GM12878 (cell line): ENCODE measurements at regions of chr12 and their contacts with region 1.

Region 1: GRCh38 chr12:110619534-110619953 is 5.6 kb downstream of the TCTN1 start:
- DNase-seq: peak; percentile 80
- ATAC-seq: peak; percentile 91
- H3K4me3 ChIP-seq: peak overlapping the region; percentile 75
- H3K27ac ChIP-seq: peak overlapping the region; percentile 61
- H3K4me1 ChIP-seq: peaks cover 25% of the 10 kb centered on the region
- H3K27me3 ChIP-seq: no peaks in the 10 kb centered on the region
- CTCF ChIP-seq: peak; percentile 40 to 81 (median 46); a peak in 5 of 6 replicates
- EP300 ChIP-seq: peak; percentile 60 to 94
- POLR2A ChIP-seq: no peak
- RAD21 ChIP-seq: peak; percentile 76

Region 2: GRCh38 chr12:110565919-110566871 is 53.3 kb before region 1 on chr12:
- CTCF ChIA-PET with region 1: no interaction called
- POLR2A ChIA-PET with region 1: no interaction called
- RAD21 ChIA-PET with region 1: no interaction called
- SMC1A ChIA-PET with region 1: no interaction called
- in situ Hi-C with region 1: no loop called
- intact Hi-C with region 1: no loop called
- DNase-seq: no peak
- ATAC-seq: peak; percentile 8; the same call in 2 of the 3 replicates
- H3K4me3 ChIP-seq: no peak overlapping the region
- H3K27ac ChIP-seq: peak overlapping the region; percentile 4; the same call in 1 of the 2 replicates
- H3K4me1 ChIP-seq: peaks cover 20% of the 10 kb centered on the region; the same call in 1 of the 2 replicates
- H3K27me3 ChIP-seq: no peaks in the 10 kb centered on the region
- CTCF ChIP-seq: no peak
- EP300 ChIP-seq: no peak
- POLR2A ChIP-seq: no peak
- RAD21 ChIP-seq: no peak

Region 3: GRCh38 chr12:110590806-110591326 is 28.7 kb before region 1 on chr12:
- CTCF ChIA-PET with region 1: no interaction called
- POLR2A ChIA-PET with region 1: no interaction called
- RAD21 ChIA-PET with region 1: no interaction called
- SMC1A ChIA-PET with region 1: no interaction called
- in situ Hi-C with region 1: no loop called
- intact Hi-C with region 1: no loop called
- DNase-seq: peak; percentile 79
- ATAC-seq: peak; percentile 93
- H3K4me3 ChIP-seq: peak overlapping the region; percentile 42; the same call in 1 of the 2 replicates
- H3K27ac ChIP-seq: peak overlapping the region; percentile 85
- H3K4me1 ChIP-seq: peaks cover 15% of the 10 kb centered on the region
- H3K27me3 ChIP-seq: no peaks in the 10 kb centered on the region
- CTCF ChIP-seq: no peak
- EP300 ChIP-seq: peak in 1 of 2 experiments; percentile 81; a peak in 2 of 4 replicates
- POLR2A ChIP-seq: no peak
- RAD21 ChIP-seq: no peak

Region 4: DNA sequence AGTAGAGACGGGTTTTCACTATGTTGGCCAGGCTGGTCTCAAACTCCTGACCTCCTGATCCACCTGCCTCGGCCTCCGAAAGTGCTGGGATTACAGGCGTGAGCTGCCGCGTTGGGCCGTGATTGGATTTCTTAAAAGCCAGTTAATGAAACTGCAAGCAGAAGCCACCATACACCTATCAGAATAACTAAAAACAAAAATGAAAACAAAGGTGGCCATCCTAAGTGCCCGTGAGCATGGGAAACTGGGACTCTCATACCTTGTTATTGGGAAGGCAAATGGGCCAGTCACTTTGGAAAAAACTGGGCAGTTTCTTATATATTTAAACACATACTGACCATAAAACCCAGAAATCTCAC is 13.3 kb before region 1 on chr12:
- CTCF ChIA-PET with region 1: interaction called, 11 read pairs
- POLR2A ChIA-PET with region 1: interaction called, 12 read pairs
- RAD21 ChIA-PET with region 1: interaction called, 13 read pairs
- SMC1A ChIA-PET with region 1: interaction called, 22 read pairs
- in situ Hi-C with region 1: no loop called
- intact Hi-C with region 1: no loop called
- DNase-seq: no peak
- ATAC-seq: peak; percentile 57
- H3K4me3 ChIP-seq: peak overlapping the region; percentile 63
- H3K27ac ChIP-seq: peak overlapping the region; percentile 86
- H3K4me1 ChIP-seq: peaks cover 20% of the 10 kb centered on the region
- H3K27me3 ChIP-seq: no peaks in the 10 kb centered on the region
- CTCF ChIP-seq: no peak
- EP300 ChIP-seq: no peak
- POLR2A ChIP-seq: no peak
- RAD21 ChIP-seq: no peak

Region 5: GRCh38 chr12:110647631-110648040 is 28.1 kb after region 1 on chr12:
- CTCF ChIA-PET with region 1: interaction called, 12 read pairs
- POLR2A ChIA-PET with region 1: interaction called, 6 read pairs
- RAD21 ChIA-PET with region 1: interaction called, 23 read pairs
- SMC1A ChIA-PET with region 1: interaction called, 24 read pairs
- in situ Hi-C with region 1: no loop called
- intact Hi-C with region 1: no loop called
- DNase-seq: no peak
- ATAC-seq: peak; percentile 88
- H3K4me3 ChIP-seq: no peak overlapping the region
- H3K27ac ChIP-seq: peak overlapping the region; percentile 20; the same call in 1 of the 2 replicates
- H3K4me1 ChIP-seq: peaks cover 17% of the 10 kb centered on the region
- H3K27me3 ChIP-seq: no peaks in the 10 kb centered on the region
- CTCF ChIP-seq: no peak
- EP300 ChIP-seq: peak in 1 of 2 experiments; percentile 35; a peak in 1 of 4 replicates
- POLR2A ChIP-seq: no peak
- RAD21 ChIP-seq: no peak

Region 6: GRCh38 chr12:110670161-110670701 is 50.7 kb after region 1 on chr12:
- CTCF ChIA-PET with region 1: interaction called, 24 read pairs
- POLR2A ChIA-PET with region 1: interaction called, 11 read pairs
- RAD21 ChIA-PET with region 1: interaction called, 22 read pairs
- SMC1A ChIA-PET with region 1: interaction called, 49 read pairs
- in situ Hi-C with region 1: no loop called
- intact Hi-C with region 1: loop called (anchors 2 kb)
- DNase-seq: peak; percentile 95
- ATAC-seq: peak; percentile 63
- H3K4me3 ChIP-seq: peak overlapping the region; percentile 82; the same call in 1 of the 2 replicates
- H3K27ac ChIP-seq: peak overlapping the region; percentile 99
- H3K4me1 ChIP-seq: peaks cover 76% of the 10 kb centered on the region
- H3K27me3 ChIP-seq: no peaks in the 10 kb centered on the region
- CTCF ChIP-seq: no peak
- EP300 ChIP-seq: peak; percentile 81 to 95
- POLR2A ChIP-seq: no peak; the same call in 1 of the 2 replicates
- RAD21 ChIP-seq: 0 out of 2 replicates have a peak, but pooled peaks have one; percentile 6

Region 7: GRCh38 chr12:110689281-110690126 is 70.0 kb after region 1 on chr12:
- CTCF ChIA-PET with region 1: interaction called, 25 read pairs
- POLR2A ChIA-PET with region 1: interaction called, 12 read pairs
- RAD21 ChIA-PET with region 1: interaction called, 9 read pairs
- SMC1A ChIA-PET with region 1: interaction called, 27 read pairs
- in situ Hi-C with region 1: no loop called
- intact Hi-C with region 1: no loop called
- DNase-seq: peak; percentile 57
- ATAC-seq: peak; percentile 75
- H3K4me3 ChIP-seq: peak overlapping the region; percentile 66
- H3K27ac ChIP-seq: peak overlapping the region; percentile 85
- H3K4me1 ChIP-seq: peaks cover 38% of the 10 kb centered on the region
- H3K27me3 ChIP-seq: no peaks in the 10 kb centered on the region
- CTCF ChIP-seq: no peak
- EP300 ChIP-seq: no peak
- POLR2A ChIP-seq: peak; percentile 89
- RAD21 ChIP-seq: no peak

Region 8: DNA sequence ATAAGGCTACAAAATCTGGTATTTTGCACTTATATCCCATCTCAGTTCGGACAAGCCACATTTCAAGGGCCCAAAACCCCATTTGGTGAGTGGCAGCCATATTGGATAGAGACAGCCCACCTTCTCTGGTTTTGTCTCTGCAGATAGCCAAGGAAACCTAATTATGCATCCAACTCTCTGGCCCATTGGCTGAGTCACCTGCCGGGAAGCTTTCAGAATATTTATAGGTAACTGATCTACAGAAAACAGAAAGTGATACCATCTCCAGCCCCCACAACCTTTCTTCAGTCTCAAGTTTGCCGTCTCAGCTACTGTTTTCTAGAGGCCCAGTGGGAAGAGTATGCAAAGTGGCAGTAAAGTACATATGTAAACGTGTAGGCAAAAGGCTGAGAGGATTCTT is 156.9 kb after region 1 on chr12:
- CTCF ChIA-PET with region 1: interaction called, 13 read pairs
- POLR2A ChIA-PET with region 1: interaction called, 3 read pairs
- RAD21 ChIA-PET with region 1: interaction called, 3 read pairs
- SMC1A ChIA-PET with region 1: no interaction called
- in situ Hi-C with region 1: no loop called
- intact Hi-C with region 1: no loop called
- DNase-seq: peak; percentile 96
- ATAC-seq: peak; percentile 96
- H3K4me3 ChIP-seq: 0 out of 2 replicates have a peak overlapping the region, but pooled peaks have one; percentile 41
- H3K27ac ChIP-seq: peak overlapping the region; percentile 65
- H3K4me1 ChIP-seq: peaks cover 40% of the 10 kb centered on the region
- H3K27me3 ChIP-seq: no peaks in the 10 kb centered on the region
- CTCF ChIP-seq: no peak
- EP300 ChIP-seq: no peak
- POLR2A ChIP-seq: no peak
- RAD21 ChIP-seq: 0 out of 2 replicates have a peak, but pooled peaks have one; percentile 10

Region 9: DNA sequence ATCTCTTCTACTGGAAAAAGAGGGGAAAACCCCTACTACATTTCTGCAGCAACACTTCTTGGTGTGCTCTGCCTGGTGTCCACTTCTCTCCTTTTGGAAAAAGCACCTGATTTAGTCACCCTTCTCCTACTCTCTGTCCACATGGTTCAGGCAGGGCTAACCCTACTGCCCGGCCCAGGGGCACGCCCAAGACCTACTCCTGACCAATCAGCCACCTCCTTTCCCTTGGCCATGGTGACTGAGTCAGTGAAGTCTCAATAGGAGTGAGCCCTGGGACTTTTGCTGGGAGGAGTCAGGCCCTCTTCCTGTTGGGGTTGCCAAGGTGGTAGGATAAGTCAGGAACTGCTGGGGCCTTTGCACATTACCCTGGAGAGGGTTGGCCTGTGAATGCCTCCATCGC is 353.3 kb after region 1 on chr12:
- CTCF ChIA-PET with region 1: no interaction called
- POLR2A ChIA-PET with region 1: no interaction called
- RAD21 ChIA-PET with region 1: no interaction called
- SMC1A ChIA-PET with region 1: no interaction called
- in situ Hi-C with region 1: no loop called
- intact Hi-C with region 1: no loop called
- DNase-seq: no peak
- ATAC-seq: no peak
- H3K4me3 ChIP-seq: no peak overlapping the region
- H3K27ac ChIP-seq: no peak overlapping the region
- H3K4me1 ChIP-seq: no peaks in the 10 kb centered on the region
- H3K27me3 ChIP-seq: no peaks in the 10 kb centered on the region
- CTCF ChIP-seq: no peak
- EP300 ChIP-seq: no peak
- POLR2A ChIP-seq: no peak
- RAD21 ChIP-seq: no peak